Naive thymus-derived CD4-positive, alpha-beta T cell (primary cell): ENCODE measurements at regions of chr11 and their contacts with region 1.

Region 1: GRCh38 chr11:118610804-118611795 is 3.7 kb downstream of the PHLDB1 start:
- DNase-seq: peak; percentile 72 to 89 (median 82)
- ATAC-seq: peak; percentile 71
- H3K4me3 ChIP-seq: peak overlapping the region; percentile 61
- H3K4me3 Mint-ChIP-seq: peak overlapping the region; percentile 35 to 88 (median 78)
- H3K27ac ChIP-seq: peak overlapping the region; percentile 57
- H3K27ac Mint-ChIP-seq: peak overlapping the region in 7 of 9 donors; percentile 33 to 82 (median 70)
- H3K4me1 ChIP-seq: peaks cover 18 to 23% of the 10 kb centered on the region in 2 donors
- H3K4me1 Mint-ChIP-seq: peaks cover 16 to 26% (median 23%) of the 10 kb centered on the region in 7 donors
- H3K27me3 ChIP-seq: no peaks in the 10 kb centered on the region
- H3K27me3 Mint-ChIP-seq: peaks cover 0 to 54% (median 0%) of the 10 kb centered on the region in 5 donors

Region 2: DNA sequence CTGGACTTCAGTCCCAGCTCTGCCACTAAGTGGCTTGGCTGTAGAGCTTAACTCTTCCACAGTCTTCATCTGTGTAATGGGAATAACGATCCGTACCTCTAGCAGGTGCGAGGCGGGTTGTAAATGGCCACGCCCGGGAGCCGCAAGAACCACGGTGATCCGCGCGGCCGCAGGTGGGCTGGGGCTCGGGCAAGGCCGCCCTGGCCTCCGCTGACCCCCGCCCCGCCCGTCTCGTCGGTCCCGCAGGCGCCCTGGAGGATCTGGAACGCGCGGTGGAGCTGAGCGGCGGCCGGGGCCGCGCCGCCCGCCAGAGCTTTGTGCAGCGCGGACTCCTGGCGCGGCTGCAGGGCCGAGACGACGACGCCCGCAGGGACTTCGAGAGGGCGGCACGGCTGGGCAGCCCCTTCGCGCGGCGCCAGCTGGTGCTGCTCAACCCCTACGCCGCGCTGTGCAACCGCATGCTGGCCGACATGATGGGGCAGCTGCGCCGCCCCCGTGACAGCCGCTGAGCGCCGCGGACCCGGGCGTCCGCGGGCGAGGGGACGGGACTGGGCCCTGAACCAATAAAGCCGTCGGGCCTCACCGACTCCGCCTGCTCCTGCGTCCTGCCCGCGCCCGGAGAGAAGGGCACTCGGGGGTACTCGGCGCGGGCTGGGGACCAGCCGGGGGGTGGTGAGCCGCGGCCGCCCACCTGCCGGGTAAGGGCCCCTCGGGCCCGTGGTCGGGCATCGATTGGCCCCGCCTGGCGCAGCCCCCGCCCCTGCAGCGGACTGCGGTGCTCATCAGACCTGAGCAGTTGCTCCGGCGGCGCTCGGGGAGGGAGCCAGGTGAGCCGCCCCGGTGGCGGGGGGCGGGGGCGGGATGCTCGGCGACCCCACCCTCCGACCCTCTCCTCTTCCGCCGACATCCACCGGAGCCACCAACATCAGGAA is 80.4 kb before region 1 on chr11 and contains the start of gene TMEM25:
- CTCF ChIA-PET with region 1: no interaction called
- POLR2A ChIA-PET with region 1: no interaction called
- intact Hi-C with region 1: loop called in 1 of 2 experiments (anchors 2 kb)
- DNase-seq: peak; percentile 55 to 82 (median 73)
- ATAC-seq: peak; percentile 90
- H3K4me3 ChIP-seq: peak within 1 kb of the TSS; percentile 83
- H3K4me3 Mint-ChIP-seq: peak within 1 kb of the TSS; percentile 92 to 99 (median 94)
- H3K27ac ChIP-seq: peak within 1 kb of the TSS; percentile 83
- H3K27ac Mint-ChIP-seq: peak within 1 kb of the TSS; percentile 82 to 96 (median 91)
- H3K4me1 ChIP-seq: peaks cover 13 to 14% of the 10 kb centered on the region in 2 donors
- H3K4me1 Mint-ChIP-seq: peaks cover 24 to 51% (median 45%) of the 10 kb centered on the region in 7 donors
- H3K27me3 ChIP-seq: no peaks in the 10 kb centered on the region
- H3K27me3 Mint-ChIP-seq: peaks cover 0 to 3% (median 0%) of the 10 kb centered on the region in 5 donors
- total RNA-seq, gene TMEM25: 12.1 to 32.8 (median 27.6) TPM

Region 3: GRCh38 chr11:118592616-118593367 is 18.3 kb before region 1 on chr11:
- CTCF ChIA-PET with region 1: interaction called, 19 read pairs
- POLR2A ChIA-PET with region 1: interaction called, 7 read pairs
- intact Hi-C with region 1: loop called (anchors 1 kb)
- DNase-seq: no peak
- ATAC-seq: no peak
- H3K4me3 ChIP-seq: no peak overlapping the region
- H3K4me3 Mint-ChIP-seq: no peak overlapping the region
- H3K27ac ChIP-seq: no peak overlapping the region
- H3K27ac Mint-ChIP-seq: peak overlapping the region in 1 of 9 donors; percentile 25
- H3K4me1 ChIP-seq: peaks cover 0 to 10% of the 10 kb centered on the region in 2 donors
- H3K4me1 Mint-ChIP-seq: peaks cover 5 to 22% (median 16%) of the 10 kb centered on the region in 7 donors
- H3K27me3 ChIP-seq: no peaks in the 10 kb centered on the region
- H3K27me3 Mint-ChIP-seq: no peaks in the 10 kb centered on the region

Region 4: GRCh38 chr11:118757876-118758399 is 146.8 kb after region 1 on chr11:
- CTCF ChIA-PET with region 1: no interaction called
- POLR2A ChIA-PET with region 1: no interaction called
- intact Hi-C with region 1: loop called in 1 of 2 experiments (anchors 10 kb)
- DNase-seq: no peak
- ATAC-seq: no peak
- H3K4me3 ChIP-seq: no peak overlapping the region
- H3K4me3 Mint-ChIP-seq: no peak overlapping the region
- H3K27ac ChIP-seq: no peak overlapping the region
- H3K27ac Mint-ChIP-seq: peak overlapping the region in 7 of 9 donors; percentile 21 to 82 (median 59)
- H3K4me1 ChIP-seq: no peaks in the 10 kb centered on the region
- H3K4me1 Mint-ChIP-seq: peaks cover 0 to 22% (median 9%) of the 10 kb centered on the region in 7 donors
- H3K27me3 ChIP-seq: no peaks in the 10 kb centered on the region
- H3K27me3 Mint-ChIP-seq: no peaks in the 10 kb centered on the region

Region 5: DNA sequence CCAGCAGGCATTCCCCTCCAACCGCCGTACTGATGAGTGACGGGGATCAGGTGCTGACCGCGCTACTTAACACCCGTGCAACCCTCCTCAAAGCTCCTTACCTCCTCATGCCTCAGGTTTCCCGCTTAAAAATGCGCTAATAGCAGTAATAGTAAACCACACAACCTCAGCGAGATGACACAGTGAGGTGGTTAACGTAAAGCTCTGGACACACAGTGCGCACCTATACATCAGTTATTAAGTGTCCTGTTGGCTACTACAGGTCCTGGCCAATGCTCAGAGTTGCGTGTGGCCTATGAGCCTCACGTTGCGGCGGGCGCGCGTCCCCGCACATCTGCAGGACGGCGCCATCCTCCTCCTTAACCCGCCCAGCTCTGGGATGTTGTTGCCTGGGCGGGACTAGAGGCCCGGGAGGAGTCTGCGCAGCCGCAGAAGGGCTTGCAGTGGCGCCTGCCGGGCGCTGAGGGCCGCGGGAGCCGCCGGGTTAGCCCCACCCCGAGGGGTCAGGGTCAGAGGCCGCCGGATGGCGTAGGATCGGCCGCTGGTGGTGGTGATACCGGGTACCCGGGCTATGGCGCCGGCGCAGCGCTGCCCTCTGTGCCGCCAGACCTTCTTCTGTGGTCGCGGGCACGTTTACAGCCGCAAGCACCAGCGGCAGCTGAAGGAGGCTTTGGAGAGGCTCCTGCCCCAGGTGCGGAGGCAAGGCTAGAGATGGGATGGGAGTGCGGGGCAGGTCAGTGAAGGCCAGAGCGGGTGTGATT is 386.7 kb after region 1 on chr11 and contains the start of gene CENATAC:
- CTCF ChIA-PET with region 1: no interaction called
- POLR2A ChIA-PET with region 1: interaction called, 4 read pairs
- intact Hi-C with region 1: loop called in 1 of 2 experiments (anchors 1 kb)
- DNase-seq: peak; percentile 91 to 98 (median 94)
- ATAC-seq: peak; percentile 98
- H3K4me3 ChIP-seq: peak within 1 kb of the TSS; percentile 91
- H3K4me3 Mint-ChIP-seq: peak within 1 kb of the TSS; percentile 87 to 99 (median 94)
- H3K27ac ChIP-seq: peak within 1 kb of the TSS; percentile 85
- H3K27ac Mint-ChIP-seq: peak within 1 kb of the TSS; percentile 87 to 98 (median 92)
- H3K4me1 ChIP-seq: peaks cover 6 to 16% of the 10 kb centered on the region in 2 donors
- H3K4me1 Mint-ChIP-seq: peaks cover 26 to 45% (median 37%) of the 10 kb centered on the region in 7 donors
- H3K27me3 ChIP-seq: no peaks in the 10 kb centered on the region
- H3K27me3 Mint-ChIP-seq: no peaks in the 10 kb centered on the region
- total RNA-seq, gene CENATAC: 53.5 to 136 (median 109) TPM